Mammary epithelial cell (primary cell): ENCODE measurements at regions of chr11 and their contacts with region 1.

Region 1: GRCh38 chr11:3807909-3808860 is at the start of gene PGAP2:
- DNase-seq: peak; percentile 62
- H3K4me3 ChIP-seq: peak within 1 kb of the TSS; percentile 65 to 77 (median 68)
- H3K27ac ChIP-seq: peak within 1 kb of the TSS; percentile 21
- H3K4me1 ChIP-seq: peaks cover 26% of the 10 kb centered on the region
- H3K27me3 ChIP-seq: no peaks in the 10 kb centered on the region
- CTCF ChIP-seq: peak; percentile 77 to 87
- total RNA-seq, gene PGAP2: 20.3 to 36.4 TPM

Region 2: GRCh38 chr11:2699531-2700414 is 1108.4 kb before region 1 on chr11 and contains the start of gene KCNQ1OT1:
- CTCF ChIA-PET with region 1: interaction called, 15 read pairs
- dilution Hi-C with region 1: no loop called
- in situ Hi-C with region 1: no loop called
- intact Hi-C with region 1: no loop called
- DNase-seq: peak; percentile 86
- H3K4me3 ChIP-seq: peak within 1 kb of the TSS; percentile 50 to 84 (median 78)
- H3K27ac ChIP-seq: peak within 1 kb of the TSS; percentile 46
- H3K4me1 ChIP-seq: no peaks in the 10 kb centered on the region
- H3K27me3 ChIP-seq: no peaks in the 10 kb centered on the region
- CTCF ChIP-seq: no peak
- total RNA-seq, gene KCNQ1OT1: 0.82 to 1.0 TPM

Region 3: DNA sequence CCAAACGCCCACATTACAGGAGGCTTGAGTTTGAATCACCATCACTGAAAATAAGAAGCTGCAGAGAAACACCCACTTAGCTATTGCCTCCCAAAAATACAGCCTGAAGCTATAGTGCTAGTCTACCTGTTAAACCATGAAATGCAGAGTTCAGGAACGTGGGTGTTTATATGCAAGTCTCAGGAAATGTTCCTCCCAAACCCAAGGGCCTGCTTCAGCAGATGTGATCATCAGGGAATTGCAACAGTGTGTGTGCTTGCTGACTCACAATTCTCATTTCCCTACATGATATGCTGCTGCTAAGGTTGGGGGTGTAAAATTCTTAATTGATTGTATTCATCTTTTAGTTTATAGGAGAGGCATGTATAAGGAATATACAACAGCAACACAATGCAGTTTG is 60.5 kb before region 1 on chr11:
- CTCF ChIA-PET with region 1: no interaction called
- dilution Hi-C with region 1: no loop called
- in situ Hi-C with region 1: no loop called
- intact Hi-C with region 1: loop called (anchors 1 kb)
- DNase-seq: peak; percentile 90
- H3K4me3 ChIP-seq: no peak overlapping the region
- H3K27ac ChIP-seq: peak overlapping the region; percentile 26
- H3K4me1 ChIP-seq: peaks cover 14% of the 10 kb centered on the region
- H3K27me3 ChIP-seq: no peaks in the 10 kb centered on the region
- CTCF ChIP-seq: no peak

Region 4: GRCh38 chr11:3781423-3781822 is 26.8 kb before region 1 on chr11:
- CTCF ChIA-PET with region 1: interaction called, 4 read pairs
- dilution Hi-C with region 1: no loop called
- in situ Hi-C with region 1: no loop called
- intact Hi-C with region 1: loop called (anchors 2 kb)
- DNase-seq: peak; percentile 61
- H3K4me3 ChIP-seq: no peak overlapping the region
- H3K27ac ChIP-seq: peak overlapping the region; percentile 57
- H3K4me1 ChIP-seq: peaks cover 5% of the 10 kb centered on the region
- H3K27me3 ChIP-seq: no peaks in the 10 kb centered on the region
- CTCF ChIP-seq: no peak